ENCODE measurements at regions of chr4 and their contacts with region 1.

Region 1: DNA sequence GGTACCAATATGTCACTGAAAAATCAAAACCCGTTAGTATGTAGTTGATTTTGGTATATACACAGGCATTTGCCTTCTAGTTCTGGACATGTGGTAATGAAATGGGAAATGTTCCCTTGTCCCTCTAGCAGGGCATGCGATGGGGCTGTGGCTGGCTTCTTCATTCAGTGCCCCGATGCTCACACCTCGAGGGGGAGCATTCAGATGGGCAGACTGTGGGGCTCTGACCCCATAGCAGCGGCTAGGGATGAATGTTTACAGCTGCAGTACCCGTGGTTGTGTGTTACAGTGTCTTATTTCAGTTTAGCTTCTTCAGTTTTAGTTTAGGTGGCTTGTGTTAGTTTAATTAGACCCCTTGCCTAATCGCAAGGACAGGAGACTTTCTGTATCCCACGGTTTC is 1741.0 kb upstream of the PCDH10 start:
- DNase-seq: no peak
- H3K4me3 ChIP-seq: no peak overlapping the region
- H3K27ac ChIP-seq: no peak overlapping the region
- H3K4me1 ChIP-seq: no peaks in the 10 kb centered on the region
- H3K27me3 ChIP-seq: no peaks in the 10 kb centered on the region
- CTCF ChIP-seq: no peak
- POLR2A ChIP-seq: no peak

Region 2: DNA sequence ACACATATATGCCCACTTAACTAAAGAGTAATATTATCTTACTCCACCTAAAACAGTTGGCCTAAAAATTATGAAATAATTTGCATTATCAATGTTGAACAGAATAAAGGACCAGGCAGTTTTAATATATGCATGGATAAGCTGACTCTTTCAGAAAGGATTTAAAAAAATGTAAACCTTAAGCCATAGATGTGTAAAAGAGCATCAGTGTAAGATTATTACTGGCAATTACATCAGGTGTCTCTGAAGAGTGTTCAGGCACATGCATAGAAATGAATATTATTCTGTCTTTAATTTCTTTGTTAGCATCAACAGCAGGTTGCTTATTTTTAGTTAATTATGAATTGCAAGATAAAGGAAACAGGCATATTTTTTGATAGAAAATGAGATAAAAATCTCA is 958.4 kb before region 1 on chr4:
- intact Hi-C with region 1: no loop called
- DNase-seq: no peak
- H3K4me3 ChIP-seq: no peak overlapping the region
- H3K27ac ChIP-seq: no peak overlapping the region
- H3K4me1 ChIP-seq: no peaks in the 10 kb centered on the region
- H3K27me3 ChIP-seq: no peaks in the 10 kb centered on the region
- CTCF ChIP-seq: no peak
- POLR2A ChIP-seq: no peak

Region 3: DNA sequence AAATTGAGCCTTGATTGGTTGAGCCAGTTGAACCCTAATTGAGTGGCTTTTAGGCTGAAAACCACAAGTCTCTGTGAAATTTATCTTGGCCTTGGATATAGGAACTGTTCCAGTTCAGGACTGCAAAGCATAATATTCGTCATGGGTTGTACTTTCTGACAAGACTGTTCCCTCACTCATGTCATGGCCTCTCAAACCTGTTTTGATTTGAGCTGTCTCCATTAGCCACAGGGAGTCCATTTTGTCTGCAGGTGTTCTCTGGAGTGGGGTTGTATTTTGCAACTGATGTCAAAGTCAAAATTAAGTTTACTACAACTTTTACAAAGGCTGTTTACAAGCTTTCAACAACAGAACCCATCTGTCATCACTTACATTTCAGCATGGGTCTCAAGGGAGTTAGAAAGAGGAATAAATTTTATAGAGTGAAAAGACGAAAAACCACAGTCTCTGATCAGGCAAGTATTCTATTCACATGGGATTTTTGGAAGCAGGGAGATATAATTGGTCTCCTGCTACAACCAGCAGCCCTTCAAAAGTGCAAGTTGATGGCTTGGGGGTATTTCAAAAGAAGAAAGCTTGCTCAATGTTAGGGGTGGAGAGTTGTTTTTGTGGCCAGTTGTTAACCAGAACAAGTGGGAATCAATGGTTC is 595.9 kb before region 1 on chr4:
- intact Hi-C with region 1: loop called (anchors 10 kb)
- DNase-seq: no peak
- H3K4me3 ChIP-seq: no peak overlapping the region
- H3K27ac ChIP-seq: no peak overlapping the region
- H3K4me1 ChIP-seq: no peaks in the 10 kb centered on the region
- H3K27me3 ChIP-seq: no peaks in the 10 kb centered on the region
- CTCF ChIP-seq: no peak
- POLR2A ChIP-seq: no peak

Region 4: GRCh38 chr4:131044368-131044767 is 363.7 kb before region 1 on chr4:
- intact Hi-C with region 1: no loop called
- DNase-seq: no peak
- H3K4me3 ChIP-seq: no peak overlapping the region
- H3K27ac ChIP-seq: no peak overlapping the region
- H3K4me1 ChIP-seq: no peaks in the 10 kb centered on the region
- H3K27me3 ChIP-seq: no peaks in the 10 kb centered on the region
- CTCF ChIP-seq: no peak
- POLR2A ChIP-seq: no peak

Measured in breast epithelium (tissue), 4 donors.